Mammary epithelial cell (primary cell): ENCODE measurements at regions of chr18 and their contacts with region 1.

Region 1: GRCh38 chr18:67217551-67218166 is 298.9 kb downstream of the DSEL start:
- DNase-seq: peak; percentile 39
- H3K4me3 ChIP-seq: no peak overlapping the region
- H3K27ac ChIP-seq: no peak overlapping the region
- H3K4me1 ChIP-seq: no peaks in the 10 kb centered on the region
- H3K27me3 ChIP-seq: no peaks in the 10 kb centered on the region
- CTCF ChIP-seq: peak; percentile 51 to 66

Region 2: DNA sequence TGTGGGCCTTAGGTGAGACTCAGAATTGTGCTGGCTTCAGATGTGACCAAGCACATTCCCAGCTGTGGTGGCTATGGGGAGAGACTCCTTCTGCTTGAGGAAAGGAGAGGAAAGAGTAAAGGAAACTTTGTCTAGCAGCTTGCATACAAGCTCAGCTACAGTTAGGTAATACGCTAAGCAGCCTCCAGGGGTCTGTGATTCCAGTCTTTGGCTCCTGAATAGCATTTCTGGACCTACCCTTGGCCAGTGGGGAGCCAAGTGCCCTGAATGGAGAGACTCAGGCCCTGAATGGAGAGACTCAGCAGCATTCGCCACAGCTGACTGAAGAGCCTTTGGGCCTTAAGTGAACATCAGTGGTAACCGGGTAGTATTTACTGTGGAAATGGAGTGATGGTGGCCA is 1694.2 kb before region 1 on chr18:
- CTCF ChIA-PET with region 1: no interaction called
- dilution Hi-C with region 1: no loop called
- in situ Hi-C with region 1: no loop called
- intact Hi-C with region 1: no loop called
- DNase-seq: no peak
- H3K4me3 ChIP-seq: no peak overlapping the region
- H3K27ac ChIP-seq: no peak overlapping the region
- H3K4me1 ChIP-seq: no peaks in the 10 kb centered on the region
- H3K27me3 ChIP-seq: no peaks in the 10 kb centered on the region
- CTCF ChIP-seq: no peak

Region 3: GRCh38 chr18:67463829-67464228 is 246.2 kb after region 1 on chr18:
- CTCF ChIA-PET with region 1: no interaction called
- dilution Hi-C with region 1: no loop called
- in situ Hi-C with region 1: no loop called
- intact Hi-C with region 1: loop called (anchors 10 kb)
- DNase-seq: peak; percentile 17
- H3K4me3 ChIP-seq: no peak overlapping the region
- H3K27ac ChIP-seq: no peak overlapping the region
- H3K4me1 ChIP-seq: no peaks in the 10 kb centered on the region
- H3K27me3 ChIP-seq: no peaks in the 10 kb centered on the region
- CTCF ChIP-seq: peak; percentile 28 to 40

Region 4: GRCh38 chr18:67845035-67845434 is 627.4 kb after region 1 on chr18:
- CTCF ChIA-PET with region 1: no interaction called
- dilution Hi-C with region 1: no loop called
- in situ Hi-C with region 1: no loop called
- intact Hi-C with region 1: loop called (anchors 10 kb)
- DNase-seq: peak; percentile 13
- H3K4me3 ChIP-seq: no peak overlapping the region
- H3K27ac ChIP-seq: no peak overlapping the region
- H3K4me1 ChIP-seq: no peaks in the 10 kb centered on the region
- H3K27me3 ChIP-seq: no peaks in the 10 kb centered on the region
- CTCF ChIP-seq: peak; percentile 9 to 53

Region 5: DNA sequence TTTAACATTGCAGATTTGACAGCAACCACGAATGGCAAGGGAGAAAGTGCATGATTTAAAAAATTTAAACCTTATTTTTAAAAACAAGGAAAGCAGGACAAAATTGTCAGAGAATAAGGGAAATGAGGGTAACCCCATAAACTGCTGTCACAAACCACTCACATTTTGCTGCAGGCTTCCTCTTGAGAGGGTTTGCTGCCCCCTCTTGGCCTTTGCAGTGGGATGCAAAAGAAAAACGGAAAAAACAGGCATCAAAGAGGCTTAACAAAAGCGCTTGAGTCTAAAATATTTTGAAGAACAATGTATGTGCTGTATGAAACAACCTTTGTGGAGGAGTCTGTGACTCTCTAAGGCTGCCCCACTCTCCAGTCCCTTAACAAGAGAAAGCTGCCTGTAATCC is 1405.7 kb after region 1 on chr18:
- CTCF ChIA-PET with region 1: no interaction called
- dilution Hi-C with region 1: no loop called
- in situ Hi-C with region 1: no loop called
- intact Hi-C with region 1: loop called (anchors 1 kb)
- DNase-seq: peak; percentile 45
- H3K4me3 ChIP-seq: no peak overlapping the region
- H3K27ac ChIP-seq: no peak overlapping the region
- H3K4me1 ChIP-seq: no peaks in the 10 kb centered on the region
- H3K27me3 ChIP-seq: no peaks in the 10 kb centered on the region
- CTCF ChIP-seq: peak; percentile 81 to 89

Region 6: DNA sequence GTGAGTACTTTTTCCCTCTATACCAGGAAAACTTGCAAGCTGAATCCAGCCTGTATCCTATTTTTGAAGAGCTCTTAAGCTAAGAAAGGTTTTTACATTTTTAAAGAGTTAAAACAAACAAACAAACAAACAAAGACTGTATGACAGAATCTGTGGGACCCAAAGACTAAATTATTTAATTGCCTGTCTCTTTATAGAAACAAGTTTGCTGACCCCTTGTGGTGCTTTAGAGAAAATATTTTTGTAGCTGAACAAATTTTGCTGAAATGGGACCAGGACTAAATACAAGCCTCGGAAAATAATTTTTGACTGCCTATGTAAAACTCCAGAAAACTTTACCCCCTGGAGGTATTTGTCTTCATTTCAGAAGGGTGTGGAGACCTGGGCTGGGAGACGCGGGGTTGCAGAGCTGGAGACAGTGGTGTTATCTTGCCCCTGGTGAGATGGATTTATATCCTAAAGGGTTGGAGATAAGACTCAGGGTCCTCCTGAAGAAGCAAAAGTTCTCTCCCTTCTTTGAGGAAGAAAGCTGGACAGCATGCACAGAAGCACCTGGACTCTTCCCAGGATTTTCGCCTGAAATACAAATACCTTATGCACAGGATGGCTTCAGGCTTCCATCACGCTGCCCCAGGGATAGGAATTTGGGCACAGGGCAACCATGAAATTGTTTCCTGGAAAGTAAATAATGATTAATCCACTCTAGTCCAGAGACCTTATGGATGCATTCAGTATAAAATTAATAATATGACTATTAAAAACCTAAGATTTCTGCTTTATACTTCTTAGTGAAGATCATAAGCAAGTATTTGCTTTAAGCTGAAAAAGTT is 1442.9 kb after region 1 on chr18:
- CTCF ChIA-PET with region 1: no interaction called
- dilution Hi-C with region 1: no loop called
- in situ Hi-C with region 1: loop called (anchors 10 kb)
- intact Hi-C with region 1: loop called (anchors 1 kb)
- DNase-seq: peak; percentile 27
- H3K4me3 ChIP-seq: no peak overlapping the region
- H3K27ac ChIP-seq: no peak overlapping the region
- H3K4me1 ChIP-seq: no peaks in the 10 kb centered on the region
- H3K27me3 ChIP-seq: no peaks in the 10 kb centered on the region
- CTCF ChIP-seq: peak; percentile 51 to 58

Region 7: GRCh38 chr18:68735483-68736343 is 1518.1 kb after region 1 on chr18:
- CTCF ChIA-PET with region 1: no interaction called
- dilution Hi-C with region 1: no loop called
- in situ Hi-C with region 1: no loop called
- intact Hi-C with region 1: loop called (anchors 1 kb)
- DNase-seq: peak; percentile 37
- H3K4me3 ChIP-seq: no peak overlapping the region
- H3K27ac ChIP-seq: no peak overlapping the region
- H3K4me1 ChIP-seq: no peaks in the 10 kb centered on the region
- H3K27me3 ChIP-seq: no peaks in the 10 kb centered on the region
- CTCF ChIP-seq: peak; percentile 82 to 96

Region 8: DNA sequence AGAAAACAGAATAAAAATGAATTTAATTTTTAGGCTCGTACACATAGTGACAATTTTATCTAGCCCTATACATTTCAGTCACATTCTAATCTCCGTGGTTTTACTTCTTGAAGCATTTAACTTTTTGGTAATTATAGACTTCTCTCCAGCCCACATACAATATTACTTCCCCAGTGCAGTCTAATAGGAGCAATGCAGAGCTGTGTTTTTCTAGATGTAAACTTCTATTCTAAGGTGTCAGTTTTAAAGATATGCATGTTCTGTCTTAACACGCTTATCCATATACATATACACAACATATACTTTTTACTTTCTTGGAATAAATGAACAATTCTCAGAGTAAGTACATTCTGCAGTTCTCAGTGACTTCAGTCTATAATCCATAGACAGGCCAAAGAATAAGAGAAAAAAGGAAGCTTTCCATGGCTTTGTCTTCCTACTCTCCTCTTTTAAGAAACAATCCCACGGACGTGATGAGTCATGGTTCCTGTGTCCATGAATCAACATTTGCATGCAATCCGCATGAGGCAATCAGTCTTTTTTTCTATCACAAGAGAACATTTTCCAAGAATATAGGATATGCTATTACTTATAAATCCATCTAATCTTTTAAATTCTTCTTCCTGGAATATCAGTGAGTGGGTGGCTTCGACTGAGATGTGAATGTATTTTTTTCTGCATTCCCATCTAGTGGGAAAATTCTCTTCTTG is 1623.0 kb after region 1 on chr18:
- CTCF ChIA-PET with region 1: no interaction called
- dilution Hi-C with region 1: no loop called
- in situ Hi-C with region 1: no loop called
- intact Hi-C with region 1: loop called (anchors 5 kb)
- DNase-seq: peak; percentile 77
- H3K4me3 ChIP-seq: no peak overlapping the region
- H3K27ac ChIP-seq: no peak overlapping the region
- H3K4me1 ChIP-seq: peaks cover 12% of the 10 kb centered on the region
- H3K27me3 ChIP-seq: no peaks in the 10 kb centered on the region
- CTCF ChIP-seq: no peak